ENCODE measurements at regions of chr5 and their contacts with region 1.

Region 1: GRCh38 chr5:55994574-55995333 is at the start of gene IL6ST:
- DNase-seq: peak; percentile 93
- H3K4me3 Mint-ChIP-seq: peak within 1 kb of the TSS; percentile 95
- H3K27ac Mint-ChIP-seq: peak within 1 kb of the TSS; percentile 94
- H3K4me1 Mint-ChIP-seq: peaks cover 53% of the 10 kb centered on the region
- H3K27me3 Mint-ChIP-seq: no peaks in the 10 kb centered on the region
- total RNA-seq, gene IL6ST: 56.2 and 67.2 TPM in 2 replicates

Region 2: GRCh38 chr5:56019306-56020272 is 24.8 kb after region 1 on chr5:
- intact Hi-C with region 1: loop called (anchors 1 kb)
- DNase-seq: no peak
- H3K4me3 Mint-ChIP-seq: peak overlapping the region; percentile 30
- H3K27ac Mint-ChIP-seq: peak overlapping the region; percentile 18
- H3K4me1 Mint-ChIP-seq: peaks cover 20% of the 10 kb centered on the region
- H3K27me3 Mint-ChIP-seq: peaks cover 21% of the 10 kb centered on the region

Region 3: DNA sequence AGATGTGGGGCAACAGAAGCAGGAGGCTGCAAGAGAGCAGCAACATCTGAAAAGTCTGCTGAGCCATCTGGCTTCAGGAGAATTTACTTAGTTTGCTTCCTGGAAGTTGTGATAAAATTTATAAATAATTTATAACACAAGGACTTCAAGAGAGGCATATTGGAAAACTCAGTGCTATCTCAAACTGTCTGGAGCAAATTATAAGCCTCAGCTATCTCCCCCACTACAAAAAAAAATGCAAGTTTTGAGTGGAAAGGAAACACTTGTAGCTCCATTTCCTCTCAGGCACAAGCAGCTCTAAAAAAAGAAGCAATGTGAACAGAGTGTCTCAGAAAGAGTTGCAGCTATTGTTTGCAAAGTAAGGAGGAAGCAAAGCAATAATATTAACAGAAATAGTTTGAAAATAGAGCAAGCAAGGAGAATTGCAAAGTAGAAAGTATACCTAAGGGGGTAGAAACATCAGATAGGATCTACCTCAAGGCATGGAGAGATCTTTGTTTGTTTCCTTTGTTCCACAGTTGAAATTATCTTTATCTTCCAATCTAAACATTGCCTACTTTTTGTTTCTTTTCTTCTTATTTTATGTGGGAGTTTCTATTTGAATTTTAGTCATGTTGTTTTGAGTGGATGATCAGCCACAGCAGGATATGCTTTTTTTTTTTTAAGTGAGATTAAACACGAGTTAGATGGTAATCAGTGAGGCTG is 55.9 kb after region 1 on chr5:
- intact Hi-C with region 1: loop called (anchors 2 kb)
- DNase-seq: no peak
- H3K4me3 Mint-ChIP-seq: peak overlapping the region; percentile 23
- H3K27ac Mint-ChIP-seq: peak overlapping the region; percentile 17
- H3K4me1 Mint-ChIP-seq: peaks cover 27% of the 10 kb centered on the region
- H3K27me3 Mint-ChIP-seq: peaks cover 31% of the 10 kb centered on the region

Region 4: GRCh38 chr5:56095579-56096102 is 100.9 kb after region 1 on chr5:
- intact Hi-C with region 1: loop called (anchors 2 kb)
- DNase-seq: no peak
- H3K4me3 Mint-ChIP-seq: no peak overlapping the region
- H3K27ac Mint-ChIP-seq: no peak overlapping the region
- H3K4me1 Mint-ChIP-seq: peaks cover 53% of the 10 kb centered on the region
- H3K27me3 Mint-ChIP-seq: no peaks in the 10 kb centered on the region

Region 5: GRCh38 chr5:56105511-56106291 is 110.9 kb after region 1 on chr5:
- intact Hi-C with region 1: no loop called
- DNase-seq: no peak
- H3K4me3 Mint-ChIP-seq: no peak overlapping the region
- H3K27ac Mint-ChIP-seq: peak overlapping the region; percentile 24
- H3K4me1 Mint-ChIP-seq: peaks cover 48% of the 10 kb centered on the region
- H3K27me3 Mint-ChIP-seq: no peaks in the 10 kb centered on the region

Region 6: GRCh38 chr5:56200856-56201666 is 206.3 kb after region 1 on chr5:
- intact Hi-C with region 1: loop called (anchors 5 kb)
- DNase-seq: peak; percentile 46
- H3K4me3 Mint-ChIP-seq: no peak overlapping the region
- H3K27ac Mint-ChIP-seq: no peak overlapping the region
- H3K4me1 Mint-ChIP-seq: peaks cover 21% of the 10 kb centered on the region
- H3K27me3 Mint-ChIP-seq: no peaks in the 10 kb centered on the region

Measured in activated T-helper 2 cell treated with anti-CD3 and anti-CD28 coated beads, Interferon-gamma antibody, Interleukin-2, Interleukin-4, amounts not matched to agents 10 μg/mL and 5 μg/mL and 100 μg/mL, durations not matched to agents 14 hours and 24 hours and 36 hours (primary cell).